ENCODE measurements at regions of chr2 and their contacts with region 1.

Region 1: DNA sequence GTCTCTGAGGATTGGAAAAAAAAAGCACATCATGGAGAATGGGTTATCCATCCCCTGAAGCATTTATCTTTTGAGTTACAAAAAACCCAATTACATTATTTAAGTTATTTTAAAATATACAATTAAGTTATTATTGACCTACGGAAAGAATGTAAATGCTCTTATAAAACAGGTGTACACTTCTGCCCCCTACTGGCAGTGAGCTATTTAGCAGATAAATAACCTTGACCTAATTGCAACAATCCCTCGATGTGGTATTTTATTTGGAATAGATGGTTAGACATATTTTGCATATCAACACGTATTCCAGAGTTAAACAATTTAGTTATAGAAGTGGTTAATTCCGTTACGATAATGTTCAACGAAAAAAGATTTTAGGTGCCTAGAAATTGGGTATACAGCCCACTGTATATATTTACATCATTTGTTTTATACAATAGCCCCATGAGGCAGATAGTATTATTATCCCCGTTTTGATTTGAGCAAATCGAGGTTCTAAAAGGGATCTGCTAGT is 9.1 kb upstream of the DAW1 start:
- DNase-seq: peak; percentile 51
- ATAC-seq: no peak
- H3K4me3 ChIP-seq: peak overlapping the region in 1 of 2 experiments; percentile 42; a peak in 2 of 4 replicates
- H3K27ac ChIP-seq: peak overlapping the region; percentile 64
- H3K4me1 ChIP-seq: peaks cover 14 to 28% of the 10 kb centered on the region in 2 experiments
- H3K27me3 ChIP-seq: no peaks in the 10 kb centered on the region
- CTCF ChIP-seq: peak; percentile 68 to 84 (median 70); a peak in 5 of 6 replicates
- POLR2A ChIP-seq: no peak
- RAD21 ChIP-seq: peak; percentile 77

Region 2: DNA sequence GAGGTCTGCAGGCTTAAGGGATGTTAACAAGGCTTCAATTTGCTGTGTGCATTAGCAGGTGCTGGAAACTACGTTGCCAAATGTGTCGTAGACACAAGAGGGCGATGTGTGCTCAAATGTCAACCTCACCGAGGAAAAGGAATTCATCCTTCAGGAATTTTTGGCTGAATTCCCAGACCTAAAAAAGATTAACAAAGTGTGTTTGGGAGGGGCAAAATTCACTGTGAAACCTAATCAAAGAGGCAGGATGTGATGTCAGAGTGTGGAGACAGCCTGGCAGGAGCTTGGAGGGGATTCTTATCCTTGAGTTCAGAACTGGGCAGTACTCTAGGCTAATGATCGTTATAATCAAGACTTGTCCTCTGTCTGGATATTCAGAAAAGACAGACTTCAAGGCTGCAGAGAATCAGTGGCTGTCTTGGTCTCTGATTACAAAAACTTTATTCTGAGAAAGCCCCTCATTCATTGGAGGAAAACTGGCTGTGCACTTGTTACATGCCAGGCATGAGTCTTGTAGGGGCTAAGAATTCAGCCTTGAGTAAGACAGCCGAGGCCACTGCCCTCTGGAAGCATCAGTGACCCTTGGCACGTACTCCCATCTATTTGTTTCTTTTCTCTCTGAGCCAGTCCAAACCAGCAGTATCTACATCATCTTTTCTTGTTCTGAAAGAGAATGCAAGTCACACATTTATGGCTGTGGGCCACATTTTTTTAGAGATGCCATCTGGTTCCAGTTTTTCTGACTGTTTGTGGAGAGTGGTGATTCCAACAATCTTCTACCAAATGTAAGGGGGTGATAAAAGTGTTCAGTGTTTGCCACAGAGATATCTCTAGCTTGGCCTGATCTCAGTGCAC is 455.9 kb before region 1 on chr2:
- CTCF ChIA-PET with region 1: interaction called, 3 read pairs
- POLR2A ChIA-PET with region 1: no interaction called
- RAD21 ChIA-PET with region 1: no interaction called
- intact Hi-C with region 1: loop called (anchors 1 kb)
- DNase-seq: peak; percentile 94
- ATAC-seq: peak; percentile 92
- H3K4me3 ChIP-seq: 0 out of 4 replicates have a peak overlapping the region, but pooled peaks of 1 of the 2 experiments have one; percentile 4
- H3K27ac ChIP-seq: peak overlapping the region; percentile 11; the same call in 1 of the 2 replicates
- H3K4me1 ChIP-seq: peaks cover 6 to 27% of the 10 kb centered on the region in 2 experiments
- H3K27me3 ChIP-seq: no peaks in the 10 kb centered on the region
- CTCF ChIP-seq: peak; percentile 71 to 92 (median 84)
- POLR2A ChIP-seq: no peak
- RAD21 ChIP-seq: peak; percentile 99

Region 3: GRCh38 chr2:227471924-227472264 is 390.4 kb before region 1 on chr2 and contains the start of gene AGFG1:
- CTCF ChIA-PET with region 1: no interaction called
- POLR2A ChIA-PET with region 1: no interaction called
- RAD21 ChIA-PET with region 1: no interaction called
- intact Hi-C with region 1: loop called (anchors 10 kb)
- DNase-seq: peak; percentile 50
- ATAC-seq: peak; percentile 90
- H3K4me3 ChIP-seq: peak within 1 kb of the TSS; percentile 70 to 81
- H3K27ac ChIP-seq: peak within 1 kb of the TSS; percentile 67; the same call in 1 of the 2 replicates
- H3K4me1 ChIP-seq: peaks cover 11 to 24% of the 10 kb centered on the region in 2 experiments
- H3K27me3 ChIP-seq: no peaks in the 10 kb centered on the region
- CTCF ChIP-seq: peak; percentile 69 to 98 (median 90)
- POLR2A ChIP-seq: no peak
- RAD21 ChIP-seq: peak; percentile 51
- total RNA-seq, gene AGFG1: 72.5 TPM

Region 4: DNA sequence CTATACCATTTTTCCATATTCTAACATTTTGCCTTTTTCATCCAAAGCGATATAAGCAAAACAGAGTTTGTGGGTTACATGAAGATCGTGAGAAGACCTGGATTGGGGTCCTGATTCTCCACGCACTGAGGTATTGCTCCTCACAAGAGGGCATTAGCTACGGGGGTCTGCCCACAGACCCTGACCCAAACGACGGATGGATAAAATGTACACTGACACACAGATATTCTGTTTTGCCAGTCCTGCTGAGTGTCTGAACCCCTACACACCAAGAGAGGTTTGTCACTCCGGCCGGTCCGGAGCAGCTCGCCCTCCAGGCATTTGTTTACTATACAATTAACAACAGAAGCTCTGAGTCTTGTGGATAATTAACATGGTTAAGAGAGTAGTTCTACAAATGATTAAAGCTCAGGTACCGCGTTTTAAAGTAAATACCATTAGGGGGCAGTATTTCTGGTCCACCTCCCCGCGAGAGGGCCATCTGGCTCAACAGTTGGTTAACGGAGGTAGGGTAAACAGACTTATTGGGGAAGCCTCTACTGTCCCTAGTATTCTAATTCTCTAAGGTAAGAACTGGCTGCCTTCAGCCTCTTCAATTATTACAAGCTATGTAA is 88.2 kb before region 1 on chr2:
- CTCF ChIA-PET with region 1: interaction called, 14 read pairs
- POLR2A ChIA-PET with region 1: no interaction called
- RAD21 ChIA-PET with region 1: interaction called in 1 of 2 experiments, 3 read pairs
- intact Hi-C with region 1: loop called (anchors 2 kb)
- DNase-seq: peak; percentile 8
- ATAC-seq: peak; percentile 89
- H3K4me3 ChIP-seq: no peak overlapping the region
- H3K27ac ChIP-seq: no peak overlapping the region
- H3K4me1 ChIP-seq: no peaks in the 10 kb centered on the region
- H3K27me3 ChIP-seq: no peaks in the 10 kb centered on the region
- CTCF ChIP-seq: peak; percentile 56 to 98 (median 66); a peak in 5 of 6 replicates
- POLR2A ChIP-seq: no peak
- RAD21 ChIP-seq: peak; percentile 68

Region 5: DNA sequence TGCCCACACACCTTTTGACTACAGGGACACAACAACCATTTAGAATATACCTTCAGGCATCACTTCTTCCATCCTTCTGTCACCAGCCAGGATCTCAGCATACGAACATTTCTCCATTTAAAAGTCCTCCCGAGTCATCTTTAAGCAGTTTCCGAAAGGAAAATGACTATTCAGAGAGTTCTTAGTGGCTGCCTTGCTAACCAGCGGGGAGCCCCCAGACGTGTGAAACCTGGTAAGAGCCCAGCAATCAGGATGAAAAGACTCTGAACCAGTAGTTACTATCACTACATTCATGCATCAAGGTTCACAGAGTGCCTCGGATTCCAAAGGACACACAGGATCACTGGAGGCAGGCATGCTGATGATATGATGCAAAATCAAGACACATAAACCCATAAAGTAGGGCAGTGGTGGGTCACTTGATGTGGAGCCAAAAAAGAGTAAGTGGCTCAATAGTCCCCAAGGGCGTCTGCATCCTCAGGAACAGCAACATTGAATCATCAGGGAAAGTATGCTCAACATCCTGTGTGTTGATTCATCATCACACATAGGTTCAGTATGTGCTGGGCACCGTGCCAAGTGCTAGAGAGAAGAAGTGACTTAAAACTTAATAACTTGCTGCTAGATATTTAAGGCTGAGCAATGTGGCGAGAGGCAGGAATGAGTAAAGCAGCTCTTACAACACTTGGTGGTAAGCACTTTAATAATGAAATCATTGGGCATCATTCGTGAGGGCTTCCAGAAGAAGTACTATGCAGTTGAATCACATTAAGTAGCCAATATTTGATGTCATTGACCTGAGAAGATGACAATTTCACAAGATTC is 44.2 kb before region 1 on chr2:
- CTCF ChIA-PET with region 1: interaction called, 6 read pairs
- POLR2A ChIA-PET with region 1: interaction called, 21 read pairs
- RAD21 ChIA-PET with region 1: no interaction called
- intact Hi-C with region 1: loop called (anchors 2 kb)
- DNase-seq: peak; percentile 99
- ATAC-seq: peak; percentile 83
- H3K4me3 ChIP-seq: peak overlapping the region; percentile 6 to 41
- H3K27ac ChIP-seq: peak overlapping the region; percentile 43; the same call in 1 of the 2 replicates
- H3K4me1 ChIP-seq: peaks cover 31 to 64% of the 10 kb centered on the region in 2 experiments
- H3K27me3 ChIP-seq: no peaks in the 10 kb centered on the region
- CTCF ChIP-seq: no peak
- POLR2A ChIP-seq: no peak
- RAD21 ChIP-seq: peak; percentile 40